Panc1 (cell line): ENCODE measurements at regions of chr16 and their contacts with region 1.

Region 1: DNA sequence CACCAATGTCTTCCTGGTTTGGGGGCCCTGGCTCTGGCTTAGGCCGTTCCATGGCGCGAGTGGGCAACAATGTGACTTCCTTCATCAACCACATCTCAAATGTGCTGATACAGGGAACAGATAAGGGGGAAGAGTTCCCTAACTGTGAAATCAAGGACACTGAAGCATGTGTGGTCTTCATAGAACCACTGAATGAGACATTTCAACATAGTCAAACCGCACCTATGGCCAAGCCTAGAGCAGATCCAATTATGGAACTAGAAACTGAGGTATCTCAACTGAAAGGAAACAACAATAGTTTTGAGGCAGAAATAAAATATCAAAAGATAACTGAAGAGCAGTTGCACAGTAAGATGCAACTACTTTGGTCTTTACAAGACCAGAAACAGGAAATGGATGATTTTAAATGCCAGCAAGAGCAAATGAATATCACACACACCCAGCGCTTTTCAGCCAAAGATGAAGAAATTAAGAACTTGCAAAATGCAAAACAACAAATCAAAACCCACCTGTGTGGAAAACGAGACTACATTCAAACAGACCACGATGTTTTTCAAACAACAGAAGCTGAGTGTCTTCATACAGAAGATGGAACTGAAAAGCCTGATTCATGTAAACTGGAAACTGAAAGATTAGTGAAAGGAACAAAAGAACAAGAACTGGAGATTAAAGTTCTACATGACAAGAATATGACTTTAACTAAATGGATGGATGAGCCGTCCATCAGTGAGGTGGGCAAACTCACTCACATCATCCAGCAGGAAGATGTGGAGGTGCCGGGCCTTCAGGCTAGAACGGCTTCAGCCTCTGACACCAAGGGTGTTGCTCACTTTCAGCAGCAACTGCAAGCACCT is 18.1 kb upstream of the LCMT1 start:
- DNase-seq: no peak
- ATAC-seq: no peak
- H3K4me3 ChIP-seq: no peak overlapping the region
- H3K27ac ChIP-seq: no peak overlapping the region
- H3K4me1 ChIP-seq: no peaks in the 10 kb centered on the region
- H3K27me3 ChIP-seq: peaks cover 4% of the 10 kb centered on the region; the same call in 1 of the 2 replicates
- CTCF ChIP-seq: no peak

Region 2: DNA sequence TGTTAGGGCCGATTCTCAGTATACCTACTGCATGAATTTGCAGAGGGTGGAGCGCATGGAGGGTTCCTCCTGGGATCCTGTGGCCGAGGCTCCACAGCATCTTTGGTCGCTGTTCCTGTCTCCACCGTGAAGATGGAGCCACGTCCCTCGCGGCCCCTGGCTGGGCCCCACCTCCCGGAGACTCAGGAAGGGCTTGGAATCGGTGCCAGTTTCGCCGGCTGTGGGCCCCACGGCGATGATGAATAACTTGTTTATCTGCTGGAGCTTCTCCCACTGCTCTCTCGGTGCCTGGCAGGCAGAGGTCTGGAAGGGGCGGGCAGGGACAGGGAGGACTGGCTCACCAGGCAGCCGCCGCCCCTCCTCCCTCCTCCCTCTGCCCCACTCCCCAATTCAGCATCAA is 239.6 kb before region 1 on chr16:
- CTCF ChIA-PET with region 1: no interaction called
- POLR2A ChIA-PET with region 1: no interaction called
- in situ Hi-C with region 1: no loop called
- intact Hi-C with region 1: no loop called
- DNase-seq: no peak
- ATAC-seq: peak; percentile 74
- H3K4me3 ChIP-seq: peak overlapping the region; percentile 14 to 48
- H3K27ac ChIP-seq: peak overlapping the region; percentile 73
- H3K4me1 ChIP-seq: peaks cover 32% of the 10 kb centered on the region
- H3K27me3 ChIP-seq: no peaks in the 10 kb centered on the region
- CTCF ChIP-seq: no peak

Region 3: DNA sequence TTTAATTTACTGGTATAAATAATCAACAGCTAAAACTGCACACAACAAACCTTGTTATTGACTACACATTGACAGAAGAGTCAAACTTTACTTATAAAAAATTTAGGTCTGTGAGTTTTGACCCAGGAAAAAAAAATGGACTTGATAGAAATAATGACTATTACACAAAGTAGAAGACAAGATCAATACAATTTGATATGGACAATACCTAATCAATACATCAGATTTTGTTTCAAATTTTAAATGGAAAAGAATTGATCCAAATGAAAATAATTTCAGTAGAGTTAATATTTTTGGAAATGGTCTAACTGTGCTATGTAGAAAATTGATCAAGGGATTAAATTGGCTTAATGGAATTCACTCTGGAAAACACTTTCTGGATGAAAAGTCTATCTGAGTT is 255.9 kb after region 1 on chr16:
- CTCF ChIA-PET with region 1: no interaction called
- POLR2A ChIA-PET with region 1: no interaction called
- in situ Hi-C with region 1: no loop called
- intact Hi-C with region 1: no loop called
- DNase-seq: no peak
- ATAC-seq: no peak
- H3K4me3 ChIP-seq: no peak overlapping the region
- H3K27ac ChIP-seq: no peak overlapping the region
- H3K4me1 ChIP-seq: no peaks in the 10 kb centered on the region
- H3K27me3 ChIP-seq: no peaks in the 10 kb centered on the region
- CTCF ChIP-seq: no peak

Region 4: DNA sequence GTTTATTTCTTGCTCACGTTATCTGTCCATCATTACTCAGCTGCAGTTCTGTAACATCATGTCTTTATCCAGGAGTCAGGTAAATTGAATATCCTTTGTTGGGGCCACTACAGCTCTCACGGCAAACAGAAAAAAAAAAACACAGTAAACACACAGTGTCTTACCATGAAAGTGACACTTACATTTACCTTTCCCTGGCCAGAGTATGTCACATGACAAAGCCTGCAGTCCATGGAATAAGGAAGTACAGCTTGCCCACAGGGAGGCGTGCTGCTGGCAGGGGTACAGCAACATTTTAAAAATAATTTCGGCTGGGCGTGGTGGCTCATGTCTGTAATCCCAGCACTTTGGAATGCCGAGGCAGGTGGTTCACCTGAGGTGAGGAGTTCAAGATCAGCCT is 512.6 kb after region 1 on chr16:
- CTCF ChIA-PET with region 1: no interaction called
- POLR2A ChIA-PET with region 1: no interaction called
- in situ Hi-C with region 1: no loop called
- intact Hi-C with region 1: no loop called
- DNase-seq: no peak
- ATAC-seq: no peak
- H3K4me3 ChIP-seq: no peak overlapping the region
- H3K27ac ChIP-seq: no peak overlapping the region
- H3K4me1 ChIP-seq: no peaks in the 10 kb centered on the region
- H3K27me3 ChIP-seq: no peaks in the 10 kb centered on the region; the same call in 1 of the 2 replicates
- CTCF ChIP-seq: no peak

Region 5: GRCh38 chr16:25721439-25721838 is 628.0 kb after region 1 on chr16:
- CTCF ChIA-PET with region 1: no interaction called
- POLR2A ChIA-PET with region 1: interaction called, 16 read pairs
- in situ Hi-C with region 1: no loop called
- intact Hi-C with region 1: no loop called
- DNase-seq: no peak
- ATAC-seq: no peak
- H3K4me3 ChIP-seq: no peak overlapping the region
- H3K27ac ChIP-seq: no peak overlapping the region
- H3K4me1 ChIP-seq: no peaks in the 10 kb centered on the region
- H3K27me3 ChIP-seq: peaks cover 13% of the 10 kb centered on the region
- CTCF ChIP-seq: no peak